ENCODE measurements at regions of chr12 and their contacts with region 1.

Region 1: DNA sequence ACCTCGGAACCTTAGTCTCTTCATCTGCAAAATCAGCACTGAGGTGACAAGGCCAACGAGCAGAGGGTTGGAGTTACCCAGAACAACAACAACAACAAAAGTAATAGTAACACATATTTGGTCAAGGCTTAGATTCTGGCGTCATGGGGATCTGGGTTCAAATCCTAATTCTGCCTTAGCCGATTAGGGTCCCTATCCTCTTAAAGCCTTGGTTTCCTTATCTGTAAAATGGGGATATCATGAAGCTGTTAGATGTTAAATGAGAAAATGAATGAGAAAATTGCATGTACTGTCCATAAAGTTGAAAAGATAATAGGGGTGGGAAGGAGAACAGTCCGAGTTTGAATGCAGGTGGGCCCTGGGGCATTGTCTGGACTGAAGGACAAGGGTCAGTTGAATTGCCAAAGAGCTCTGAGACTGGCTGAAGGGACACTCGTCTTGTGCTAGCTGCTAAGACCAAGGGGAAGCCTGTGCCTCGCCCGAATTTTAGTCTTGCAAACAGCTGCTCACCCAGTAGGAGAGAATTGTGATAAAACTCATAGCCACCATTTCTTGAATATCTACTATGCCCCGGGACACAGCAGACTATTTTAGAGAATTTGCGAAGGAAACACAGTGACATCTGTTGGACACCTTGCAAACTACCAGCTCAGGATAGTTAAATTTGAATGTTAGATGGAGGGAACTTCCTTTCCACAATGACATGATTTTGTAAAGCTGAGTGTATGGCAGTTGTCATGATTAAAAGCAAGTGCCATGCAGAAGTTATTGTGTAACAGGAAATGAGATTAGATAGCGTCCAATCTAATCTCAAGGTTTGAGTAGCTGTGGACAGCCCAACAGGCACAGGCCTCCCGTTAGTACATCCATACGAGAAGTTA is 6.8 kb upstream of the HNF1A start:
- DNase-seq: peak; percentile 58
- H3K4me3 ChIP-seq: no peak overlapping the region
- H3K27ac ChIP-seq: no peak overlapping the region
- H3K4me1 ChIP-seq: no peaks in the 10 kb centered on the region
- H3K27me3 ChIP-seq: no peaks in the 10 kb centered on the region
- CTCF ChIP-seq: peak; percentile 54 to 58
- POLR2A ChIP-seq: no peak

Region 2: DNA sequence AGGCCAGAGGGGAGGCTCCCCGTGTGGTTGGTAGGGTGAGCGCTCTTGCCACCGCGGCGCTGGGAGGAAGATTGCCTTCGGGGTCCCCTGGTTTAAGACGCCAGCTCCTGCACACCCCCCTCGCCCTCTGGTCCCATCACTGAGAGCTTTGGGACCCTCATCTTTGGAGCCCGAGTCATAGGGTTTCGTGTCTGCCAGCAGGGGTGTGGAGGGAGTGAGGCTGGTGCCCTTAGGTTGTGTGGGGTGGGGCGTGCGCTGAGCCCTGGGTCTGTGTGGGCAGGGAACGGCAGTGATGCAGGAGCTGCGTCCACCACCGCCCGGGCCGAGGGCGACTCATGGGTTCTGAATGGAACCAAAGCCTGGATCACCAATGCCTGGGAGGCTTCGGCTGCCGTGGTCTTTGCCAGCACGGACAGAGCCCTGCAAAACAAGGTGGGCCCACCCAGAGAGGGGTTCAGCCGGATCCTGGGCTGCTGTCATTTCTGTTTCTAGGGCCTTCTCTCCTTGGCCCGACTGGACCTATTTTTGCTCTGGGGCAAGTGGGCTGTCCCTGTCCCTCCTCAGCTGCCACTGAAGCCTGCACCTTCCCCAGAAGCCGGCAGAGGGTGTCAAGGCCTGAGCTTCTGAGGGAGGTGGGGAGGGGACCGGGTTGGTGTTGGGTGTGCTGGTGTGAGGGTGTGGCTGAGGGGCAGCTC is 233.8 kb before region 1 on chr12:
- CTCF ChIA-PET with region 1: interaction called, 39 read pairs
- POLR2A ChIA-PET with region 1: no interaction called
- dilution Hi-C with region 1: no loop called
- intact Hi-C with region 1: loop called (anchors 1 kb)
- DNase-seq: no peak
- H3K4me3 ChIP-seq: no peak overlapping the region
- H3K27ac ChIP-seq: no peak overlapping the region
- H3K4me1 ChIP-seq: no peaks in the 10 kb centered on the region
- H3K27me3 ChIP-seq: no peaks in the 10 kb centered on the region
- CTCF ChIP-seq: peak in 1 of 2 donors; percentile 35
- POLR2A ChIP-seq: no peak

Region 3: DNA sequence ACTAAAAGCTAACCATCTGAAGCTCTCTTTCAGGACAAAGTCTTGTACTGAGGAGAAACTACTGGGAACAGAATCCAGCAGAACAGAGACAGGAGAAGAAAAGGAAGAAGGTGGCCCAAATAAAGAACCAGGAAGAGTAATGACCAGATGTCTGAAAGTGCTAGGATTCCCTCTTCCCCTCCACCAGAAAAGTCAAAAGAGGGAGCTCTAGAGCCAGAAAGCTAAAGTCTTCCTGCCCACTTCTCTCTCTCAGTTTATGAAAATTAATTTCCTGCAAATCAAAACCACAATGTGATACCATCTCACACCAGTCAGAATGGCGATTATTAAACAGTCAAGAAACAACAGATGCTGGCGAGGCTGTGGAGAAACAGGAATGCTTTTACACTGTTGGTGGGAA is 114.6 kb before region 1 on chr12:
- CTCF ChIA-PET with region 1: interaction called, 16 read pairs
- POLR2A ChIA-PET with region 1: no interaction called
- dilution Hi-C with region 1: no loop called
- intact Hi-C with region 1: loop called (anchors 1 kb)
- DNase-seq: no peak
- H3K4me3 ChIP-seq: no peak overlapping the region
- H3K27ac ChIP-seq: no peak overlapping the region
- H3K4me1 ChIP-seq: no peaks in the 10 kb centered on the region
- H3K27me3 ChIP-seq: no peaks in the 10 kb centered on the region
- CTCF ChIP-seq: peak in 1 of 2 donors; percentile 9
- POLR2A ChIP-seq: no peak

Region 4: DNA sequence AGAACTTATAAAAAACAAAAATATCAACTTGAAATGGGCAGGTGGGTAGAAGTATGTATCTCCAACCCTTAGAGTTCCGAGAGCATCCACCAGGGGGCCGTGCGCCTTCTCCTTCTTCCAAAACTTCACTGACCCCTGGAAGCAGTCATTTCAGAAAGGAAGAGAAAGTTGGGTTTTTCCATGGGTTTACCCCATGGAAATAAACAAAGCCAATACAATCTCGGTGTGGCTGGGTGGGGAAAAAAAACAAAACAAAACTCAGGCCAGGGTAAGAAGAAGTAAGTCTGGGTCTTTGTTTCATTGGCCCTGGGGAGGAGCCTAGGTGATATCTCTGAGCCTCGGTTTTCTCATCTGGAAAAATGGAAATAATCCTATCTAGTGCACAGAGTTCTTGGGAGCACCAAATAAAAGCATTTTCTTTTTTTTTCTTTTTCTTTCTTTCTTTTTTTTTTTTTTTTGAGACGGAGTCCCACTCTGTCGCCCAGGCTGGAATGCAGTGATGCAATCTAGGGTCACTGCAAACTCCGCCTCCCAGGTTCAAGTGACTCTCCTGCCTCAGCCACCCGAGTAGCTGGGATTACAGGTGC is 26.8 kb before region 1 on chr12:
- CTCF ChIA-PET with region 1: interaction called, 23 read pairs
- POLR2A ChIA-PET with region 1: no interaction called
- dilution Hi-C with region 1: no loop called
- intact Hi-C with region 1: no loop called
- DNase-seq: peak; percentile 54
- H3K4me3 ChIP-seq: no peak overlapping the region
- H3K27ac ChIP-seq: no peak overlapping the region
- H3K4me1 ChIP-seq: no peaks in the 10 kb centered on the region
- H3K27me3 ChIP-seq: no peaks in the 10 kb centered on the region
- CTCF ChIP-seq: peak; percentile 72
- POLR2A ChIP-seq: no peak